ENCODE measurements at regions of chr11 and their contacts with region 1.

Region 1: DNA sequence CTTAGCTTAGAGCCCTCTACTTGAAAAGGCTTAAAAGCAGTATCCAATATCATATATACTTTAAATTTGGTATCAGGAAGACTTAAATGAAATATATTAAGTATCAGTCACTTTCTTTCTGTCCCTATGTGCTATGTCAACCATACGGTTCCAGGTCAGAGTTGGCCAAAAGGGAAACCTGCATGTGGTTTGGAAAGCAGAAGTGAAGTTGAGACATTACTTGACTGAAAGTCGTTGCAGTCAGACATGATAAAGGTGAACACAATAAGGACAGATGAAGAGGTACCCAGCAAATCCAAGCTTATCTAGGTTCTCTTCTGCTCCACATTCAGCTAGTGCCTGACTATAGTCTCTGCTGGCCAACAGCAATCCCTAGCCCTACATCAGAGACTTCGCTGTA is 336.8 kb downstream of the KCNA4 start:
- DNase-seq: no peak
- ATAC-seq: no peak
- H3K4me3 ChIP-seq: no peak overlapping the region
- H3K27ac ChIP-seq: no peak overlapping the region
- H3K4me1 ChIP-seq: no peaks in the 10 kb centered on the region
- H3K27me3 ChIP-seq: no peaks in the 10 kb centered on the region
- CTCF ChIP-seq: no peak

Region 2: DNA sequence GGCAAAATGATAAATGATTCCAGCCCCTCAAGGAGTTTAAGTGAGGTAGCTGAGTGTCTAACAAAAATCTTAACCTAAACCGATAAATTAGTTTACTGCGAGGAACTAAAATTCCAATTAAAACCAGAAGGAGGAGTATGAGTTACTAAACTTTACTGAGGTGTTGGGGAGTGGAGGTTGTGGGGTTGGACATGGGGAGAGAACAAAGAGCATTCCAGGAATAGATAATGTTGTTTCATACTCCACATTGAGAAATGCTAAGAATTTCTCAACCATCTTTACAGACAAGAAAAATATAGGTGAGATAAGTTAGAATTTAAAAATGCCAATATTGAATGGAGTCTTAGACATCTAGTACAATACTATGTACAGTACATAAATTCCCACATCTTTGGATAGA is 1083.2 kb before region 1 on chr11:
- intact Hi-C with region 1: loop called in 1 of 10 experiments (anchors 5 kb)
- DNase-seq: no peak
- ATAC-seq: no peak
- H3K4me3 ChIP-seq: no peak overlapping the region
- H3K27ac ChIP-seq: no peak overlapping the region
- H3K4me1 ChIP-seq: no peaks in the 10 kb centered on the region
- H3K27me3 ChIP-seq: no peaks in the 10 kb centered on the region
- CTCF ChIP-seq: no peak

Measured in heart right ventricle (tissue), 16 donors.